ENCODE measurements at regions of chr5 and their contacts with region 1.

Region 1: GRCh38 chr5:88805151-88805784 is 77.7 kb downstream of the MEF2C start:
- DNase-seq: no peak
- ATAC-seq: peak; percentile 65
- H3K4me3 Mint-ChIP-seq: peak overlapping the region; percentile 60
- H3K27ac Mint-ChIP-seq: peak overlapping the region; percentile 85
- H3K4me1 Mint-ChIP-seq: peaks cover 51% of the 10 kb centered on the region
- H3K27me3 Mint-ChIP-seq: no peaks in the 10 kb centered on the region
- CTCF ChIP-seq: no peak

Region 2: DNA sequence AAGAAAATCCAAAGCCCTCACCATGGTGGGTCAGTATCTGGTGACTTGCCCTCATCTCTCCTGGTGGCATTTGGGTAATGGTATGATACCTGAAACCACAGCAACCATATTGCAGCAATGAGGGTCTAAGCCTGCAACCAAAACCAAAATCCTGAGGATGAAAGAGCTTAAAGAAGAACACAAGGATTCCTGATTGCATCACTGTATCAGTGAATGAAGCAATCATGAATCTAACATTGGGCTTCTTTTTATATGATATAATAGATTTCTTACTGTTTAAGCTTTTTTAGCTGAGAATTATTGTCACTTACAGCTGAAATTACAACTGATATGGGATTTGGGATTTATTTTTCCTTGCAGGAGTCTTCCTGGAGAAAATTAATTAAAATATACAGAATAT is 192.2 kb before region 1 on chr5:
- CTCF ChIA-PET with region 1: no interaction called
- POLR2A ChIA-PET with region 1: no interaction called
- intact Hi-C with region 1: no loop called
- DNase-seq: no peak
- ATAC-seq: no peak
- H3K4me3 Mint-ChIP-seq: no peak overlapping the region
- H3K27ac Mint-ChIP-seq: no peak overlapping the region
- H3K4me1 Mint-ChIP-seq: no peaks in the 10 kb centered on the region
- H3K27me3 Mint-ChIP-seq: peaks cover 3% of the 10 kb centered on the region
- CTCF ChIP-seq: no peak

Region 3: GRCh38 chr5:88792144-88792840 is 13.0 kb before region 1 on chr5:
- CTCF ChIA-PET with region 1: no interaction called
- POLR2A ChIA-PET with region 1: no interaction called
- intact Hi-C with region 1: loop called (anchors 2 kb)
- DNase-seq: no peak
- ATAC-seq: peak; percentile 21
- H3K4me3 Mint-ChIP-seq: no peak overlapping the region
- H3K27ac Mint-ChIP-seq: peak overlapping the region; percentile 57
- H3K4me1 Mint-ChIP-seq: peaks cover 51% of the 10 kb centered on the region
- H3K27me3 Mint-ChIP-seq: no peaks in the 10 kb centered on the region
- CTCF ChIP-seq: no peak

Region 4: DNA sequence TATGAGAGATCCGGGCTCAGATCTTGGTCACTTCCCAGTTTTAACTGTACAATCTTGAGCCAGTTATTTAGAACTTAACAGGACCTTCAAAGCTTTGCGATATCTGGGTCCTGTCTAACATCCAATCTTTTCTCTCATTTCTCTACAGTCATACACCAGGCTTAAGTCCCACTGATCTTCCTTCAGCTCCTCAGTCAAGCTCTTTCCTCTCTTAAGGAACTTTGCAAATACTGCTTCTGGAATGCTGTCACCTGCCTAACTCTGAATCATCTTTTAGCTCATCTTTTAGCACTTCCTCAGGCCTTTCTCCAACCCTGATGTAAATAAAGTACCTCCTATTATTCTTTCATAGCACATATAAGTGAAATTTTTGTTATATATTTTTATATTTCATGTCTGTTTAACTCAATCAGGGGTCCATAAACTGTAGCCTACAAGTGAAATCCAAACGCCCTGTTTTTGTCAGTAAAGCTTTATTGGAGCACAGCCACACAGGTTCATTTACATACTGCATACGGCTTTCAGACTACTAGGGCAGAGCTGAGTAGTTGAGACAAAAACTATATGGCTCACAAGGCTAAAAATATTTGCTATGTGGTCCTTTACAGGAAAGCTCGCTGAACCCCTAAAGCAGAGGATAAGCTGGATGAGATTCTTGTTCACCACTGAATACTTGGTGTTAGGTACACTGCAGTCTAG is 14.2 kb after region 1 on chr5:
- CTCF ChIA-PET with region 1: interaction called, 5 read pairs
- POLR2A ChIA-PET with region 1: interaction called, 3 read pairs
- intact Hi-C with region 1: loop called (anchors 1 kb)
- DNase-seq: no peak
- ATAC-seq: peak; percentile 67
- H3K4me3 Mint-ChIP-seq: peak overlapping the region; percentile 80
- H3K27ac Mint-ChIP-seq: peak overlapping the region; percentile 91
- H3K4me1 Mint-ChIP-seq: peaks cover 87% of the 10 kb centered on the region
- H3K27me3 Mint-ChIP-seq: no peaks in the 10 kb centered on the region
- CTCF ChIP-seq: no peak